GM12878 (cell line): ENCODE measurements at regions of chr11 and their contacts with region 1.

Region 1: GRCh38 chr11:65652511-65653231 is 10.0 kb downstream of the RELA start:
- DNase-seq: peak; percentile 80
- ATAC-seq: peak; percentile 90
- H3K4me3 ChIP-seq: peak overlapping the region; percentile 51; the same call in 1 of the 2 replicates
- H3K27ac ChIP-seq: peak overlapping the region; percentile 90
- H3K4me1 ChIP-seq: peaks cover 16% of the 10 kb centered on the region
- H3K27me3 ChIP-seq: no peaks in the 10 kb centered on the region
- CTCF ChIP-seq: 0 out of 6 replicates have a peak, but pooled peaks of 1 of the 3 experiments have one; percentile 11
- EP300 ChIP-seq: no peak
- POLR2A ChIP-seq: peak; percentile 88
- RAD21 ChIP-seq: no peak

Region 2: DNA sequence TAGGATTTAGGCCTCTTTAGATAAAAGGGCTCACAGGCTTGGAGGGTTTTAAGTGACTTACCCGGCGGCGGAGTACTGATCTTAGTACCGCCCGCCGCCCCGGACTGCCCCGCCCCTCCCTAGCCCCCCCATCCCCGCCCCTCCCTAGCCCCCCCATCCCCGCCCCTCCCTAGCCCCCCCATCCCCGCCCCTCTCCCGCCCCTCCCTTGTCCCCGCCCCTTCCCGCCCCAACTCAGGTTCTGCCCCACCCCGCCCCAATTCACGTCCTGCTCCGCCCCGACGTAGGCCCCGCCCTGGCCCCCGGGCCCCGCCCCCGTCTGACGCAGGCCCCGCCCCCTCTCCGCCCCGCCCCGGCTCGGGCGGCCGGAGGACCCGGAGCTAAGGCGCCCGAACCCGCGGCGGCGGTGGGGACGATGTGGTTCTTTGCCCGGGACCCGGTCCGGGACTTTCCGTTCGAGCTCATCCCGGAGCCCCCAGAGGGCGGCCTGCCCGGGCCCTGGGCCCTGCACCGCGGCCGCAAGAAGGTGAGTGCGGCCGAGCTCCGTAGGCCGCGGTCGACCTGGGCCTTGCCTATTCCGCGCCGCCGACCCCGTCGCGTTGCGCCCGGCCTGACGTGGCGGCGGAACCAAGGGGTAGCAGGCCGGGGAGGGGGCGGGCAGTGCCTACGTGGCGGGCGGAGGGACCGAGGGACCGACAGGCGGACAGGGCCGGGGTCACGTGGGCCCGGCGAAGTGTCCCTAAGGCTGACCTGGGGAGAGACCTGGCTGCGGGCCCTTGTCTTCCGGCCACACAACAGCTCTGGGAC is 127.7 kb before region 1 on chr11 and contains the start of gene SCYL1:
- CTCF ChIA-PET with region 1: no interaction called
- POLR2A ChIA-PET with region 1: no interaction called
- RAD21 ChIA-PET with region 1: no interaction called
- SMC1A ChIA-PET with region 1: no interaction called
- in situ Hi-C with region 1: no loop called
- intact Hi-C with region 1: no loop called
- DNase-seq: no peak
- ATAC-seq: peak; percentile 86
- H3K4me3 ChIP-seq: peak within 1 kb of the TSS; percentile 85
- H3K27ac ChIP-seq: peak within 1 kb of the TSS; percentile 54
- H3K4me1 ChIP-seq: peaks cover 25% of the 10 kb centered on the region
- H3K27me3 ChIP-seq: no peaks in the 10 kb centered on the region
- CTCF ChIP-seq: no peak
- EP300 ChIP-seq: no peak
- POLR2A ChIP-seq: peak; percentile 74
- RAD21 ChIP-seq: no peak
- polyA plus RNA-seq, gene SCYL1: 0.80 to 6.3 TPM

Region 3: GRCh38 chr11:65625628-65626342 is 26.9 kb before region 1 on chr11:
- CTCF ChIA-PET with region 1: interaction called, 18 read pairs
- POLR2A ChIA-PET with region 1: interaction called, 3 read pairs
- RAD21 ChIA-PET with region 1: interaction called, 10 read pairs
- SMC1A ChIA-PET with region 1: interaction called, 14 read pairs
- in situ Hi-C with region 1: no loop called
- intact Hi-C with region 1: no loop called
- DNase-seq: no peak
- ATAC-seq: peak; percentile 96
- H3K4me3 ChIP-seq: no peak overlapping the region
- H3K27ac ChIP-seq: no peak overlapping the region
- H3K4me1 ChIP-seq: no peaks in the 10 kb centered on the region
- H3K27me3 ChIP-seq: no peaks in the 10 kb centered on the region
- CTCF ChIP-seq: peak; percentile 60 to 87 (median 85)
- EP300 ChIP-seq: no peak
- POLR2A ChIP-seq: no peak
- RAD21 ChIP-seq: peak; percentile 39

Region 4: GRCh38 chr11:65662799-65663638 is 10.3 kb after region 1 on chr11 and contains the start of gene RELA:
- CTCF ChIA-PET with region 1: interaction called, 11 read pairs
- POLR2A ChIA-PET with region 1: interaction called, 49 read pairs
- RAD21 ChIA-PET with region 1: interaction called, 19 read pairs
- SMC1A ChIA-PET with region 1: interaction called, 19 read pairs
- in situ Hi-C with region 1: no loop called
- intact Hi-C with region 1: no loop called
- DNase-seq: no peak
- ATAC-seq: peak; percentile 84
- H3K4me3 ChIP-seq: peak within 1 kb of the TSS; percentile 91
- H3K27ac ChIP-seq: peak within 1 kb of the TSS; percentile 98
- H3K4me1 ChIP-seq: peaks cover 9% of the 10 kb centered on the region
- H3K27me3 ChIP-seq: no peaks in the 10 kb centered on the region
- CTCF ChIP-seq: no peak
- EP300 ChIP-seq: 0 out of 4 replicates have a peak, but pooled peaks of 1 of the 2 experiments have one; percentile 24
- POLR2A ChIP-seq: peak; percentile 79
- RAD21 ChIP-seq: no peak
- polyA plus RNA-seq, gene RELA: 5.1 to 12.8 TPM